ENCODE measurements at regions of chr7 and their contacts with region 1.

Region 1: GRCh38 chr7:94449148-94449725 is 54.5 kb downstream of the COL1A2 start:
- DNase-seq: no peak
- ATAC-seq: no peak
- H3K4me3 Mint-ChIP-seq: no peak overlapping the region
- H3K27ac Mint-ChIP-seq: no peak overlapping the region
- H3K4me1 Mint-ChIP-seq: no peaks in the 10 kb centered on the region
- H3K27me3 Mint-ChIP-seq: peaks cover 3% of the 10 kb centered on the region
- CTCF ChIP-seq: peak; percentile 51

Region 2: GRCh38 chr7:94382132-94382531 is 67.1 kb before region 1 on chr7:
- CTCF ChIA-PET with region 1: no interaction called
- POLR2A ChIA-PET with region 1: no interaction called
- intact Hi-C with region 1: no loop called
- DNase-seq: no peak
- ATAC-seq: no peak
- H3K4me3 Mint-ChIP-seq: no peak overlapping the region
- H3K27ac Mint-ChIP-seq: no peak overlapping the region
- H3K4me1 Mint-ChIP-seq: no peaks in the 10 kb centered on the region
- H3K27me3 Mint-ChIP-seq: peaks cover 5% of the 10 kb centered on the region
- CTCF ChIP-seq: no peak

Region 3: GRCh38 chr7:94436018-94436604 is 13.1 kb before region 1 on chr7:
- CTCF ChIA-PET with region 1: interaction called, 22 read pairs
- POLR2A ChIA-PET with region 1: no interaction called
- intact Hi-C with region 1: no loop called
- DNase-seq: peak; percentile 66
- ATAC-seq: peak; percentile 62
- H3K4me3 Mint-ChIP-seq: no peak overlapping the region
- H3K27ac Mint-ChIP-seq: no peak overlapping the region
- H3K4me1 Mint-ChIP-seq: peaks cover 5% of the 10 kb centered on the region
- H3K27me3 Mint-ChIP-seq: peaks cover 27% of the 10 kb centered on the region
- CTCF ChIP-seq: peak; percentile 79

Region 4: GRCh38 chr7:94547126-94547525 is 97.9 kb after region 1 on chr7:
- CTCF ChIA-PET with region 1: no interaction called
- POLR2A ChIA-PET with region 1: no interaction called
- intact Hi-C with region 1: no loop called
- DNase-seq: no peak
- ATAC-seq: no peak
- H3K4me3 Mint-ChIP-seq: no peak overlapping the region
- H3K27ac Mint-ChIP-seq: no peak overlapping the region
- H3K4me1 Mint-ChIP-seq: no peaks in the 10 kb centered on the region
- H3K27me3 Mint-ChIP-seq: no peaks in the 10 kb centered on the region
- CTCF ChIP-seq: no peak

Region 5: GRCh38 chr7:94657771-94658693 is 208.8 kb after region 1 on chr7:
- CTCF ChIA-PET with region 1: interaction called, 15 read pairs
- POLR2A ChIA-PET with region 1: no interaction called
- intact Hi-C with region 1: no loop called
- DNase-seq: peak; percentile 95
- ATAC-seq: peak; percentile 87
- H3K4me3 Mint-ChIP-seq: peak overlapping the region; percentile 81
- H3K27ac Mint-ChIP-seq: no peak overlapping the region
- H3K4me1 Mint-ChIP-seq: peaks cover 15% of the 10 kb centered on the region
- H3K27me3 Mint-ChIP-seq: peaks cover 23% of the 10 kb centered on the region
- CTCF ChIP-seq: no peak

Region 6: DNA sequence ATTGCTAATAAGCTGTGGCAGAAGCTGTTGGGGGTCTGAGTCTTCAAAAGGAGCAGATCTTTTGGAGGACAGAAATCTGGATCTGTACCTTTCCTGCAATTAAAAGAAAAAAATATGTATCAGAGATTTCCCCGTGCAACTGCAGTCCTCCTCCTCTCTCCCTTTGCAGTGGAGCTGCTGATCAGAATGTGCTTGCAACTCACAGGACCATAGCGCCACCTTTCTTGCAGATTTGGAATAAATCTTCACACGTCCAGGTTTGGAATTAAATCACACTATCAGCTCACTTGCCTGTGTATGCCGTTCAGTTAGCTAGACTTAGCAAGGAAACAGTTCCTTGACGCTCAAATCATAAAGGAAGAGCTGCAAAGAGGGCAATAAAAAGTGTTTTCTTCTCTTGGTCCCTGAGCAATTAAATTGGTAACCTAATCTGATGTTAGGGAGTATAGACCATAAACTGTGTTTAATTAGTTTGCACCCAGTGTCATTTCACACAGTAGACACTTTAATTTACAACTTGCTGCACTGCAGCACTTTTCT is 797.7 kb after region 1 on chr7:
- CTCF ChIA-PET with region 1: interaction called, 10 read pairs
- POLR2A ChIA-PET with region 1: no interaction called
- intact Hi-C with region 1: no loop called
- DNase-seq: peak; percentile 30
- ATAC-seq: no peak
- H3K4me3 Mint-ChIP-seq: no peak overlapping the region
- H3K27ac Mint-ChIP-seq: no peak overlapping the region
- H3K4me1 Mint-ChIP-seq: no peaks in the 10 kb centered on the region
- H3K27me3 Mint-ChIP-seq: peaks cover 5% of the 10 kb centered on the region
- CTCF ChIP-seq: peak; percentile 65

Measured in activated CD8-positive, alpha-beta T cell treated with anti-CD3 and anti-CD28 coated beads for 36 hours (primary cell).